ENCODE measurements at regions of chr3 and their contacts with region 1.

Region 1: DNA sequence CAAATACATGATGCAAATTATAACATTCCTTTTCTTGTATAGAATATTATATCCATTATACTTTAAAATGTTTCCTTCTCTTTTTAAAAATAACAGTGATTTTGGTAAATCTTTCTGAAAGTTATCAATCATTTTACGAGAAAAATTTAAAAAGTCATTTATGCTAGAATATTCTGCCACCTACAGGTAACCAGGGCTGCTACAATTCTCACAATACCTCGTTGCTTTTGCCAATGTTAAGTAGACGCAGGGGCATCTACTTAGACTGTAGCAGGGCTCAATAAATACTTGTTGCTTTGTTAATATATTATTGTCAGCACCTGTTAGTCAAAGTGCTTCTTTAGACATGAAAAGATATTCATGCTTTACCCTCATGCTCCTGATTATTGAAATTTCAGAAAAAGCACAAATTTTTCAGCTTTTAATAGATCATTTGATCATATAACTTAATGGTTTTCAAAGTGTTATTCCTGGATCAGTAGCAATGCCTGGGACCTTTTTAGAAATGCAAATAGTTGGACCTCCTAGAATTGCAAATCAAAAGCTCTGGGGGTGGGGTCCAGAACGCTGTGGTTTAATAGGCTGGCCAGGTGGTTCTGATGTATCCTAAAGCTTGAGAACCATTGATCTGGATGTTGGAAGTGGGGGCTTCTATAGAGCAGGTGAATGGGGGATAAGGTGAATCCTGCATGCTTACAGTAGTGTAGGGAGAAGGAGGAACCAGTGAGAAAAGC is 223.6 kb upstream of the PDZRN3 start:
- DNase-seq: no peak
- H3K4me3 ChIP-seq: no peak overlapping the region
- H3K27ac ChIP-seq: no peak overlapping the region
- H3K27me3 ChIP-seq: no peaks in the 10 kb centered on the region
- CTCF ChIP-seq: peak; percentile 81

Region 2: DNA sequence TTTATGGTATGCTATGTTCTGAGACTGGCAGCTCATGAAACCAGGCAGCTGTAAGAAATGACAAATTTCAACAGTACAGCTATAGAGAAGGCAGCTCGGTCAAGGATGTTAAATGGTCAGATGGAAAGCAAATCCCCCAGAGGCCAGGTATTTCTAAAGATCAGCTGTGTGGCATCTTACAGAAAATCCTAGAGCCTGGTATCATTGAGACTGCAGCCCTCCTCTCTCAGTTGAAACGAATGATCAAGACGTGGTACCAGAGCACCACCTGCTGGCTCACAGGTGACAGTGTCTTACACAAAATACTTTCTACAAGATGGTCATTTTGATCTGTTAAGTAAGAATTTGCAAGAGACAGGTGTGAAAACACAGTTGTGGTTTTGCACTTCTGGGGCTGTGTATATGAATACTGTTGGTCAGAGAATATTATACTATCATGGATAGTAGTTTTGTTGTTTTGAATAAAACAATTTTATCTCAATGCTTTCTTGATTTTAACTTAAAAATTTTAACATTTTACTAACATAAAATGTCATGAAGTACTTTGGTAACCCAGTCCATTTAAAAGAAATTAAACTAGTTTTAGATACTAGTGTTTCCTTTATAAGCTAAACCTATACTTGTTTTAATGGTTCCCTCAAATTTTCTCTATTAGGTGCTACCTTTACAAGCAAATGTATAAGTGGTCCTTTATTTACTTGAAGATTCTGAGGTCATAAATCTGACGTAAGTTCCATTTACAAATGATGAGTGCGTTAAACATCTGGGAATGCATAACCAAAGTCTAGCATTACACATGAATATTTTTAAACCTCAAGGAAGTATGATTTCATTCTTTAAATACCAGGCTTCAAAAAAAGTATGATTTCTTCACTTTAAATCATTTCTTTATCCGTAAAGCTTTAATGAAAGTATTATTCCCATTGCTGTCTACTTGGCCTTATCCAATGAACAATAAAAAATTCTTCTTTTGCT is 345.4 kb before region 1 on chr3:
- CTCF ChIA-PET with region 1: interaction called, 23 read pairs
- POLR2A ChIA-PET with region 1: no interaction called
- DNase-seq: peak; percentile 85
- H3K4me3 ChIP-seq: no peak overlapping the region
- H3K27ac ChIP-seq: peak overlapping the region; percentile 80
- H3K27me3 ChIP-seq: no peaks in the 10 kb centered on the region
- CTCF ChIP-seq: peak; percentile 85

Region 3: GRCh38 chr3:73508330-73508954 is 339.9 kb before region 1 on chr3:
- CTCF ChIA-PET with region 1: interaction called, 23 read pairs
- POLR2A ChIA-PET with region 1: no interaction called
- DNase-seq: peak; percentile 36
- H3K4me3 ChIP-seq: no peak overlapping the region
- H3K27ac ChIP-seq: no peak overlapping the region
- H3K27me3 ChIP-seq: no peaks in the 10 kb centered on the region
- CTCF ChIP-seq: peak; percentile 80

Region 4: DNA sequence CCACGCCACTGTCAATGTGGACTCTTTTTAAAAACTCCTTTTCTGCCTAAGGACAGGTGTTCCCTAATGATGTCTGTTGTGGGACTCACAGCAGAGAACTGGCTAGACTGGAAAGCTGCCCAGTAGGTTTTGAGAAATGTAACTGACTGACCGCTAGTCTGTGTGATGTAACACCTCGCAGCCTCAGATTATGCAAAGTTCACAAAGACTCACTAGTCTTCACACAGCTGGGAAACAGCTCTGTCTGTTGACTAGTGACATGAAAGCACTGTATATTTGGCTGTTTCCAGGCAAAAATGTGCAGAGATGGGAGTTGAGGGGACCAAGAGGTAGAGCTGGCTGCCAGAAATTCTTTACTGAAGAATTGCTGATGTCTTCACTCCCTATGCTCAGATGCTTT is 233.9 kb before region 1 on chr3:
- CTCF ChIA-PET with region 1: interaction called, 13 read pairs
- POLR2A ChIA-PET with region 1: no interaction called
- DNase-seq: no peak
- H3K4me3 ChIP-seq: no peak overlapping the region
- H3K27ac ChIP-seq: no peak overlapping the region
- H3K27me3 ChIP-seq: no peaks in the 10 kb centered on the region
- CTCF ChIP-seq: no peak

Region 5: DNA sequence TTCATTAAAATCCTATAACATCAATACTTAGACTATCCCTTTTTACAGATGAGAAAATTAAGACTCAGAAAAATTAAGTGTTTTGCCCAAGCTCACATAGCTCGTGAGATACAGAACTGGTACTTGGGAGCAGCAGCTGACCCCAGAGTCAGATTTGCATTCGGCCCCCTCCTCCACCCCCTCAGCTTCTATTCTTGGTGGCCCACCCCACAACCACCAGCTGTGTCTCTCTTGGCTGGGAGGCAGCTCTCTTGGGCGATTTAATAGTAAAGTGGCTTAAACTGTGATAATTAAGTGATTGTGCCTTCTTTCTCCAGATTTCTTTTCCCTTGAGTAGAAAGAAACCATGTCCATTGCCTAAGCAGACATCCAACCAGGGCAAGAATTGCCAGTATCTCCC is 20.0 kb before region 1 on chr3:
- CTCF ChIA-PET with region 1: interaction called, 27 read pairs
- POLR2A ChIA-PET with region 1: no interaction called
- DNase-seq: no peak
- H3K4me3 ChIP-seq: no peak overlapping the region
- H3K27ac ChIP-seq: no peak overlapping the region
- H3K27me3 ChIP-seq: no peaks in the 10 kb centered on the region
- CTCF ChIP-seq: no peak

Region 6: GRCh38 chr3:73866846-73867245 is 18.5 kb after region 1 on chr3:
- CTCF ChIA-PET with region 1: interaction called, 41 read pairs
- POLR2A ChIA-PET with region 1: no interaction called
- DNase-seq: no peak
- H3K4me3 ChIP-seq: no peak overlapping the region
- H3K27ac ChIP-seq: no peak overlapping the region
- H3K27me3 ChIP-seq: peaks cover 3% of the 10 kb centered on the region
- CTCF ChIP-seq: no peak

Region 7: GRCh38 chr3:73966733-73967132 is 118.4 kb after region 1 on chr3:
- CTCF ChIA-PET with region 1: no interaction called
- POLR2A ChIA-PET with region 1: no interaction called
- DNase-seq: no peak
- H3K4me3 ChIP-seq: no peak overlapping the region
- H3K27ac ChIP-seq: no peak overlapping the region
- H3K27me3 ChIP-seq: no peaks in the 10 kb centered on the region
- CTCF ChIP-seq: no peak